ENCODE measurements at regions of chr11 and their contacts with region 1.

Region 1: GRCh38 chr11:119907878-119908572 is 179.0 kb upstream of the NECTIN1 start:
- DNase-seq: peak; percentile 86
- H3K4me3 ChIP-seq: no peak overlapping the region
- H3K27ac ChIP-seq: peak overlapping the region in 1 of 2 experiments; percentile 99; a peak in 2 of 4 replicates
- H3K4me1 ChIP-seq: peaks cover 0 to 74% of the 10 kb centered on the region in 2 experiments; a peak in 2 of 4 replicates
- H3K27me3 ChIP-seq: peaks cover 16% of the 10 kb centered on the region; the same call in 1 of the 2 replicates
- CTCF ChIP-seq: no peak
- EP300 ChIP-seq: peak in 1 of 2 experiments; percentile 94; a peak in 1 of 4 replicates
- RAD21 ChIP-seq: peak; percentile 57

Region 2: GRCh38 chr11:119774172-119774763 is 133.8 kb before region 1 on chr11:
- CTCF ChIA-PET with region 1: interaction called, 21 read pairs
- POLR2A ChIA-PET with region 1: interaction called, 44 read pairs
- DNase-seq: no peak
- H3K4me3 ChIP-seq: no peak overlapping the region
- H3K27ac ChIP-seq: peak overlapping the region in 1 of 2 experiments; percentile 89; a peak in 1 of 4 replicates
- H3K4me1 ChIP-seq: peaks cover 0 to 78% of the 10 kb centered on the region in 2 experiments; a peak in 2 of 4 replicates
- H3K27me3 ChIP-seq: no peaks in the 10 kb centered on the region
- CTCF ChIP-seq: no peak
- EP300 ChIP-seq: no peak
- RAD21 ChIP-seq: no peak

Region 3: GRCh38 chr11:119782006-119782738 is 125.9 kb before region 1 on chr11:
- CTCF ChIA-PET with region 1: interaction called, 15 read pairs
- POLR2A ChIA-PET with region 1: interaction called, 44 read pairs
- DNase-seq: no peak
- H3K4me3 ChIP-seq: no peak overlapping the region
- H3K27ac ChIP-seq: peak overlapping the region in 1 of 2 experiments; percentile 77; a peak in 2 of 4 replicates
- H3K4me1 ChIP-seq: peaks cover 0 to 64% of the 10 kb centered on the region in 2 experiments; a peak in 2 of 4 replicates
- H3K27me3 ChIP-seq: no peaks in the 10 kb centered on the region; the same call in none of the 2 replicates
- CTCF ChIP-seq: no peak
- EP300 ChIP-seq: no peak
- RAD21 ChIP-seq: no peak

Region 4: DNA sequence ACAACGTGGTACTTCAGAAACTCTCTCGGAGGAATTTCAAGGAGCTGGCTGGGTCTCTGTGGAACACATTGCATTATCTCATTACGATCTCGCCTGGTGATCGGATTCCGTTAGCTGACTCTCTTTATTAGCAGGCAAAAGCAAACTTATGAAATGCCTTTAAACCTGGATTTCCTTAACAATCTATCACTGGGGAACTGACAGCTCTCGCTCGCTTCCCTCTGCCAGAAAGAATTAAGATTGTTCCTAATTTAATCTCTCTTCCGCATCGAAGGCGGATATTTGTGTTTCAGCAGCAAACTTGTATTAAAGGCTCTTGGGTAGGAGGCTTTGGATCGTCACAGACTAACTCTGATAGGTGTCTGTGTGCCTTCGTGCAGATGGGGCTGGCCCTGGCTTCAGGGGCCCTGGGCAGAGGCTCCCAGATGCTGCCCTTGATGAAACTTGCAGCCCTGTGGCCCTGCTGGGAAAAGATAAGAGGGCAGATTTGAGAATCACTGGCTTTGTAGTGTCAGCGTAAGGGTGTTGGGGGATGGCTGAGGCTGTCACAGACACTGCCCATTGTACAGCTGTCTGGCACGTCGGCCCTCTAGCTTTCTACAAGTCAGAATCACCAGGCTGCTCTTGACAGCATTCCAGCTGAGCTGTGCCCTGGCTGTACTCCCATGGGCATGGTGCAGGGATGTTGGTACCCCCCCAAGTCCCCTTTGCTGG is 16.8 kb before region 1 on chr11:
- CTCF ChIA-PET with region 1: interaction called, 33 read pairs
- POLR2A ChIA-PET with region 1: interaction called, 75 read pairs
- DNase-seq: peak; percentile 74
- H3K4me3 ChIP-seq: no peak overlapping the region
- H3K27ac ChIP-seq: peak overlapping the region in 1 of 2 experiments; percentile 100; a peak in 2 of 4 replicates
- H3K4me1 ChIP-seq: peaks cover 0 to 80% of the 10 kb centered on the region in 2 experiments; a peak in 2 of 4 replicates
- H3K27me3 ChIP-seq: peaks cover 17% of the 10 kb centered on the region
- CTCF ChIP-seq: no peak
- EP300 ChIP-seq: peak in 1 of 2 experiments; percentile 96; a peak in 2 of 4 replicates
- RAD21 ChIP-seq: peak; percentile 38; the same call in 1 of the 2 replicates

Region 5: GRCh38 chr11:119896387-119897045 is 11.5 kb before region 1 on chr11:
- CTCF ChIA-PET with region 1: interaction called, 33 read pairs
- POLR2A ChIA-PET with region 1: interaction called, 75 read pairs
- DNase-seq: no peak
- H3K4me3 ChIP-seq: no peak overlapping the region
- H3K27ac ChIP-seq: no peak overlapping the region
- H3K4me1 ChIP-seq: peaks cover 0 to 52% of the 10 kb centered on the region in 2 experiments; a peak in 2 of 4 replicates
- H3K27me3 ChIP-seq: peaks cover 19% of the 10 kb centered on the region
- CTCF ChIP-seq: no peak
- EP300 ChIP-seq: no peak
- RAD21 ChIP-seq: no peak

Region 6: GRCh38 chr11:119919656-119920055 is 11.6 kb after region 1 on chr11:
- CTCF ChIA-PET with region 1: interaction called, 25 read pairs
- POLR2A ChIA-PET with region 1: no interaction called
- DNase-seq: no peak
- H3K4me3 ChIP-seq: no peak overlapping the region
- H3K27ac ChIP-seq: no peak overlapping the region
- H3K4me1 ChIP-seq: peaks cover 0 to 4% of the 10 kb centered on the region in 2 experiments; a peak in 1 of 4 replicates
- H3K27me3 ChIP-seq: peaks cover 8% of the 10 kb centered on the region; the same call in 1 of the 2 replicates
- CTCF ChIP-seq: no peak
- EP300 ChIP-seq: no peak
- RAD21 ChIP-seq: no peak

Region 7: DNA sequence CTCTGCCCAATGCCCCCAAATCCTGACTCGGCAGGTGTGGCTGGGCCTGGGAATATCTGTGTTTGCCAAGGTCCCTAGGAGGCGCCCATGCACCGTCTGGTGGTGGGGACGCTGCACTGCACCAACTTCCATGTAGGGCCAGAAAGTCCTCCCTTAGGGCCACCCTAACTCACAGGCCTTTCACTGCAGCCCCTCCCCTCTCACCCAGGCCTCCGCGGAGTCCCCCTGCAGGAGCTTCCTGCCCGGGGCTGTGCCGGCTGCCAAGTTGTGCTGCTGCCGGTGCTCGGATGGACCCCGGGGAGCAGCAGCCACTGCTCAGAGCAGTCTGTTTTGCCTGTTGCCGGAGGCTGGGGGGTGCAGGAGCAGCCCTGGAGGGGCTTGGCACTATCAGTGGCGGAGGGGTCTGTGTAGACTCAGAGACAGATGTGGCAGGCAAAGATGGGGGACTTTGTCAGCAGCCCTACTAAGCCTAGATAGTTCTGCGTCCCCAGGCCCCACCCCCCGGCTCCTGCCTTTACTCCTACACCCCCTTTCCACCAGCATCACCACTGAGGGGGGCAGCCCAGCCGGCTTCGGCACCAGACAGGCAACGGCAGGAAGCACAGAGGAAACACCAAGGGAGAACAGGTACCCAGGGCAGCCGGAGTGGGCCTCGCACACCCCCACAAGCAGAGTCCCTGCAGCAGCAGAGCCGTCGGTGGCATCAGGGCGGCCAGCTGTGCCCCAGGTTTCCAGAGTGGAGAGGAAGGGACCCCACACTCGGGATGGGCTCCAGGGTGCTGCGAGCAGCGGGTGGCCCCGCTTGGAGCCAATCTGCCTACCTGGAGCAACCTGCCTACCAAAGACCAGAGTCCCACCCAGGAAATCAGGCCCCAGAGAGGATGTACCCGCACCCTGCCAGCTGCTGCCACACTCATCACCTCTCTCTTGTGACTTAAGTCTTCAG is 105.6 kb after region 1 on chr11:
- CTCF ChIA-PET with region 1: interaction called, 10 read pairs
- POLR2A ChIA-PET with region 1: interaction called, 5 read pairs
- DNase-seq: peak; percentile 78
- H3K4me3 ChIP-seq: peak overlapping the region in 1 of 2 experiments; percentile 21; a peak in 1 of 4 replicates
- H3K27ac ChIP-seq: no peak overlapping the region; a peak in 1 of 4 replicates
- H3K4me1 ChIP-seq: peaks cover 0 to 43% of the 10 kb centered on the region in 2 experiments; a peak in 2 of 4 replicates
- H3K27me3 ChIP-seq: peaks cover 7% of the 10 kb centered on the region; the same call in 1 of the 2 replicates
- CTCF ChIP-seq: peak; percentile 54
- EP300 ChIP-seq: no peak
- RAD21 ChIP-seq: peak; percentile 71

Measured in SK-N-SH (cell line).